Heart left ventricle (tissue), 16 donors: ENCODE measurements at regions of chr1 and their contacts with region 1.

Region 1: GRCh38 chr1:184518736-184519357 is 132.0 kb downstream of the C1orf21 start:
- DNase-seq: no peak
- ATAC-seq: peak in 3 of 4 donors; percentile 43 to 84 (median 53)
- H3K4me3 ChIP-seq: no peak overlapping the region
- H3K27ac ChIP-seq: peak overlapping the region; percentile 15 to 69 (median 46)
- H3K4me1 ChIP-seq: peaks cover 0 to 47% (median 26%) of the 10 kb centered on the region in 12 donors
- H3K27me3 ChIP-seq: no peaks in the 10 kb centered on the region
- CTCF ChIP-seq: no peak
- POLR2A ChIP-seq: no peak

Region 2: DNA sequence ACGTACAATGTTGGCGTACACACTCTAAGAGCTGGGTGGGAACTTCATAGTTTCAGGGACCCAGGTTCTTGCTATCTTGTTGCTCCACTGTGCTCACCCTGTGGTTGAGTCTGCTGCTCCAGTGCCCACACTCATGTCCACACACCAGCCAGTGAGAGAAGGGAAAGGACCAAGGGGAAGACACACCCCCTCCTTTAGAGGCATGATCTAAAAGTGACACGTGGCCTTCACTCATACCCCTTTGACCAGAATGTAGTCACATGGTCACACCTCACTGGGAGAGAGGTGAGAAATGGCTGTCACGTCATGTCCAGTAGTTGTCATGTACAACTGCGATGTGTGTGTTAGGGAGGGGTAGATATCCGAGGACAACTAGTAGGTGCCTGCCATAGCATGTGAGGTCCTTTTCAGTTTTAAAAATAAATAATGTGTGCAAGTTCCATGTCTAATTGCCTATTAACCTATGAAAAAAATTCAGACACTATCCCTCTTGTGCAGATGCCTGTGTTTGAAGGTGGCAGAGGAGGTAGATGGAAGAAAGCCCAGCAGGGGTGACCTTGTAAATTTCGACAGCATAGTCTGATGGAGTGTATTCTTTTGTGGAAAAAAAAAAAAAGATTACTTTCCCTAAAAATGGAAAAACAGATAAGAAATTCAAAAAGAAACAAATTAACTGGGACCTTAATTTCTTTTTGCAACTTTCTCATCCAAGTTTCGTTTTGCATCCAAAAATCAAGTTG is 17.6 kb after region 1 on chr1:
- intact Hi-C with region 1: loop called in 1 of 10 experiments (anchors 2 kb)
- DNase-seq: no peak
- ATAC-seq: no peak
- H3K4me3 ChIP-seq: no peak overlapping the region
- H3K27ac ChIP-seq: peak overlapping the region; percentile 49 to 83 (median 66)
- H3K4me1 ChIP-seq: peaks cover 0 to 55% (median 33%) of the 10 kb centered on the region in 12 donors
- H3K27me3 ChIP-seq: no peaks in the 10 kb centered on the region
- CTCF ChIP-seq: no peak
- POLR2A ChIP-seq: no peak